ENCODE measurements at regions of chr1 and their contacts with region 1.

Region 1: DNA sequence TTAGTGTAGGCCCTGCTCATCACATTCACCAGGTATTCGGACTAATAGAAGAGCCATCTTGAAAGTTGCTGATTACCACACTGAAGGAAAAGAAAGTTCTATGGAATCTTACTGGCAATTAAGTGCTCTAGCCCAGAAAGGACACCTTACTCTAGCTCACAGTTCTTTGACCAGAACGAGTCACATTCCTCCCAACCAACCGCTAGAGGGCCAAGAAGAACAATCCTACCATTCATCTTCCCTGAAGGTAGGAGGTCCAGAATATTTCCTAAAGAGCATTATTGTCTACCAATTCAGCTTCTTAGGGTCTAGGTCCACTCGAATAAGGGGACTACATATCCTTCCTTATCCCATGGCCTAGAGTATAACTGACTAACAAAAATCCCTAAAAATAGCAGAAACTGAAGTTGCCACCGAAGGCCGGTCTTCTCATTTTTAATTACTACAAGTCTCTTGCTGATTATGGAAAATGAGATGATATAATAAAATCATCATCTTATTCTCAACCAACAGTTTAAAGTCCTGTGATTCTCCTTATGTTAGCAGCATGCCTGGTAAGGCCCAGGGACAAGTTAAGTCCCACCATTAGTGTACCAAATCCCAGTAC is 2.7 kb upstream of the FMO1 start:
- DNase-seq: no peak
- H3K4me3 ChIP-seq: no peak overlapping the region
- CTCF ChIP-seq: peak; percentile 67

Region 2: DNA sequence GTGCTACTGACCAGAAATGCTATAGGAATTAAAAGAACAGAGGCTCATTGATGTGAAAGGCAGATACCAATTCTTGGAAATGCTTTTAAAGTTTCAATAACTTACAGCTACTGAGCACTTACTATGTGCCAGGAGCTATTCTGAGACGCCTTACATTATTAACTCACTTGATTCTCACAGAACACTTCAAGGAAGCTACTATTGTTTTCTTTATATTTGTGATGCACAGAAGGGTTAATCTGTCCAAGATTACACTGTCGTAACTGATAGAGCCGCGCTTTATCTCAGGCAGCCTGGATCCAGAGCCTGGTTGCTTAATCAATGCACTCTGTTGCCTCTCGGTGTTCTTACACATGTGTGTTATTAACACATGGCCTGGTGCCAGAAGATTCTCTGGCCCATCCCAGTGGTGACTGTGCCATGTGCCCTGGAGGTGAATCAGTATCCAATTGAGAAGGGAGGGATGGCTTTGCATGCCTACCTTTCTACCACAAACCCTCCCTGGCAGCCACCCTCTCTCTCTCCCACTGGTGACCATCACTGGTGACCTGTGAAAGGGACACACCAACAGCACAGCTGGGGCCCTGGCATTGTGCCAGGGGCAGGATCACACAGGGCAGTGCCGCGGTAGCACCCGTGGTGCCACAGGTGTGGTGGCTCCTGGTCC is 11.5 kb after region 1 on chr1:
- CTCF ChIA-PET with region 1: interaction called, 15 read pairs
- POLR2A ChIA-PET with region 1: no interaction called
- DNase-seq: no peak
- H3K4me3 ChIP-seq: no peak overlapping the region
- CTCF ChIP-seq: no peak

Region 3: GRCh38 chr1:171313835-171314320 is 68.3 kb after region 1 on chr1 and contains the start of gene FMO4:
- CTCF ChIA-PET with region 1: interaction called, 41 read pairs
- POLR2A ChIA-PET with region 1: interaction called, 3 read pairs
- DNase-seq: peak; percentile 95
- H3K4me3 ChIP-seq: peak within 1 kb of the TSS; percentile 24; the same call in 1 of the 2 replicates
- CTCF ChIP-seq: peak; percentile 60